ENCODE measurements at regions of chr4 and their contacts with region 1.

Region 1: DNA sequence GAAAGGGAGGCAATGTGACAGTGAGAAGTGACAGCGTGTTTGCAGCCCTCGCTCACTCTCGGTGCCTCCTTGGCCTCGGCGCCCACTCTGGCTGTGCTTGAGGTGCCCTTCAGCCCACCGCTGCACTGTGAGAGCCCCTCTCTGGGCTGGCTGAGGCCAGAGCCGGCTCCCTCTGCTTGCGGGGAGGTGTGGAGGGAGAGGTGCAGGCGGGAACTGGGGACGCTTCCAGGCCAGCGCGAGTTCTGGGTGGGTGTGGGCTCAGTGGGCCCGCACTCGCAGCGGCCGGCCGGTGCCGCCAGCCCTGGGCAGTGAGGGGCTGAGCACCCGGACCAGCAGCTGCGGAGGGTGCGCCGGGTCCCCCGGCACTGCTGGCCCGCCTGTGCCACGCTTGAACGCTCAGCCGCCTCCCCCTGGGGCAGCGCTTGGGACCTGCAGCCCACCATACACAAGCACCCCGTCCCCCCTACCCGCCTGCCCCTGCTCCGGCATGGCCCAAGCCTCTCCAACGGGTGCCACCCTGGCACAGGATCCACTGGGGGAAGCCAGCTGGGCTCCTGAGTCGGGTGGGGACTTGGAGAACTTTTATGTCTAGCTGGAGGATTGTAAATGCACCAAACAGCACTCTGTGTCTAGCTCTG is 1142.8 kb upstream of the INTU start:
- DNase-seq: no peak

Region 2: DNA sequence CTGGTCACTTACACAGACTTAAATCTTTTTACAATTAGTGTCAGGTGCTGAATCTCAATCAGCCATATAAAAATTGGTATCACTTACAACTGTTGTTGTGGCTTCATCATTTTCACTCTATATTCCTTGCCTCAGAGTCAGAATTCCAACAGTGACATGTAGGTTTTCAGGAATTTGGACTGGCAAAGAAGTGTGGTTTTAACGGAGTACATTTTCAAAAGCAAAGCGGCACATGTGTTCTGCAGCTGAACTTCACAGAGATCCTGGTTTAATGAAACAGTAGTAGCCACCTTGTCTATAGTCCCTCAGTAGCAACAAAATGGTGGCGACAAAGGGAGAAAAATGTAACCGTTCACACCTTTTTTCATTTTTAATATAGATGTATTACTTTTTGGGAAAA is 688.6 kb before region 1 on chr4:
- intact Hi-C with region 1: loop called in 1 of 2 experiments (anchors 5 kb)
- DNase-seq: no peak